ENCODE measurements at regions of chr19 and their contacts with region 1.

Region 1: DNA sequence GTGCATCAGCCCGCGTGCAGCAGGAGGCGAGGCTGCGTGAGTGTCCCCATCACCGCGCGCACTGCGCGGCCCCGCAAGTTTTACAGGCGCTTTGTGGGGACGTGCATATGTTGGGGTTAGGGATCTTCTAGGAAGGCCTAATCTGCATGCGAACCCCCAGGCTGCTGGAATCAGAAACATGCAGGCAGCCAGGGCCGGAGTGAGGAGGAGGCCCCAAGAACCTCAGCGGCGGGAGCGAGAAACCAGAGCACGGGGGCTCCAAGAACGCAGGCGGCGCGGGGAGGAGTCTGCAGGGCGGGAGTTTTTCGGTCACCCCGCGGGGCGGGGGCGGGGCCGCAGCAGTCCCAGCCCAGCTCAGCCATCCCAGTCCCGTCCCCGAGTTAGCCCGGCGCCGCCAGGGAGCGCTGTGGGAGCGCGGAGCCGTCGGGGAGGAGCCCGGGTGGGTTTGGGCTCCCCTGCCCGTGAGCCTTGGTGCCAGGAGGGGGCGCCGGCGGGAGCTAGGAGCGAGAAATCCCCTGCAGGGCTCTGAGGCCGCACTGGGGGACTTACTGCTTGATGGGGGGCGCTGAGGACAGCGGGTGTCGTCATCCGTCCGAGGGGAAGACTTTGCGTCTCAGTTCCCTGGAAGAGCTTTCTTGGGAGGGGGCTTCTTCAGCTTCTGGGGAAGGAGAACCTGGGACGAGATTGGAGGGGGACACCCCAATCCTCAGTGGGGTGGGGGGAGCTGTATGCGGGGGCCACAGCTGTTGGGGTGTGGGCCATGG is 933 bp upstream of the NRTN start:
- DNase-seq: peak; percentile 91
- H3K4me3 Mint-ChIP-seq: peak overlapping the region; percentile 66
- H3K27ac Mint-ChIP-seq: no peak overlapping the region
- H3K4me1 Mint-ChIP-seq: no peaks in the 10 kb centered on the region
- H3K27me3 Mint-ChIP-seq: no peaks in the 10 kb centered on the region
- CTCF ChIP-seq: peak; percentile 95

Region 2: GRCh38 chr19:5775668-5776309 is 28.1 kb before region 1 on chr19:
- CTCF ChIA-PET with region 1: interaction called, 11 read pairs
- POLR2A ChIA-PET with region 1: no interaction called
- intact Hi-C with region 1: no loop called
- DNase-seq: peak; percentile 53
- H3K4me3 Mint-ChIP-seq: no peak overlapping the region
- H3K27ac Mint-ChIP-seq: no peak overlapping the region
- H3K4me1 Mint-ChIP-seq: peaks cover 5% of the 10 kb centered on the region
- H3K27me3 Mint-ChIP-seq: no peaks in the 10 kb centered on the region
- CTCF ChIP-seq: no peak

Region 3: DNA sequence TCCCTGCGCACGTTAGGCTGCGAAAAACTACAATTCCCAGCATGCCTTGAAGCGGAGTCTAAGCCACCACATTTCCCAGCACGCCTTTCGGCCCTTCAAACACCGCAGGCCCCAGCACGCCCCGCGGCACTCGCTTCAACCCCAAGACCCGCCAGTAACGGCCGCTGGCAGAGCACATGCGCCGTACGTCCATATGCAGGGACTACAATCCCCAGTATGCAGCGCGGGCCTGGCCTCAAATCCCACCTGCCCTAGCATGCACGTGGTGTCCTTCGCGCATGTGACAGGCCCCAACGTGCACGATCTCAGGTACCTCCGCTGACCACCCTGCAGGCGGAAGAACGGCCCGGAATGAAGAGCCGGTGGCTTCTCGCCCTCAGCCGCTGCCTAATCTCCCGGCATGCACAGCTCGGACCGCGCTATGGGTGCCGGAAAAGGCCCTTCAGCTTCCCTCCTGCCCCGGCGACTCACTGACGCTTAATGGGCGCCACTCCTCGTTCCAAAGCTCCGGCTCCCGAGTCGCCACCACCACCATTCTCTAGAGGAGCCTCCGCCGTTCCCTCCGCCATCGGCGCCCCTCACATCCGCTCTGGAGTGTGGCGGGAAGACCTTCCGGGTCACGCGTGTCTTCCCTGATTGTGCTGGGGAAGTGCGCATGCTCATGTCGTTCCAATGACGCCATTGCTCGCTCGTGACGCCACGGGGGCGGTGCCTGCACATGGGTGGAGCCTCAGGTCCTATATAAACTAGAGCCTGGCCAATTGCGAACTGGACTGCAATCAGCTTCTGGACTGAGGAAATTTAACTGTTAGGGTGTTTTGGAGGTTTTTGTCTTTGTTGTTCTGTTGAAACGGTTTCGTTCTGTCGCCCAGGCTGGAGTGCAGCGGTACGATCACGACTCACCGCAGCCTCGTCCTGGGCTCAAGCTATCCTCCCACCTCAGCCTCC is 13.1 kb before region 1 on chr19 and contains the start of gene DUS3L:
- CTCF ChIA-PET with region 1: interaction called, 21 read pairs
- POLR2A ChIA-PET with region 1: interaction called, 14 read pairs
- intact Hi-C with region 1: no loop called
- DNase-seq: peak; percentile 98
- H3K4me3 Mint-ChIP-seq: peak within 1 kb of the TSS; percentile 98
- H3K27ac Mint-ChIP-seq: peak within 1 kb of the TSS; percentile 100
- H3K4me1 Mint-ChIP-seq: peaks cover 14% of the 10 kb centered on the region
- H3K27me3 Mint-ChIP-seq: no peaks in the 10 kb centered on the region
- CTCF ChIP-seq: no peak
- total RNA-seq, gene DUS3L: 53.5 and 77.6 TPM in 2 replicates

Region 4: DNA sequence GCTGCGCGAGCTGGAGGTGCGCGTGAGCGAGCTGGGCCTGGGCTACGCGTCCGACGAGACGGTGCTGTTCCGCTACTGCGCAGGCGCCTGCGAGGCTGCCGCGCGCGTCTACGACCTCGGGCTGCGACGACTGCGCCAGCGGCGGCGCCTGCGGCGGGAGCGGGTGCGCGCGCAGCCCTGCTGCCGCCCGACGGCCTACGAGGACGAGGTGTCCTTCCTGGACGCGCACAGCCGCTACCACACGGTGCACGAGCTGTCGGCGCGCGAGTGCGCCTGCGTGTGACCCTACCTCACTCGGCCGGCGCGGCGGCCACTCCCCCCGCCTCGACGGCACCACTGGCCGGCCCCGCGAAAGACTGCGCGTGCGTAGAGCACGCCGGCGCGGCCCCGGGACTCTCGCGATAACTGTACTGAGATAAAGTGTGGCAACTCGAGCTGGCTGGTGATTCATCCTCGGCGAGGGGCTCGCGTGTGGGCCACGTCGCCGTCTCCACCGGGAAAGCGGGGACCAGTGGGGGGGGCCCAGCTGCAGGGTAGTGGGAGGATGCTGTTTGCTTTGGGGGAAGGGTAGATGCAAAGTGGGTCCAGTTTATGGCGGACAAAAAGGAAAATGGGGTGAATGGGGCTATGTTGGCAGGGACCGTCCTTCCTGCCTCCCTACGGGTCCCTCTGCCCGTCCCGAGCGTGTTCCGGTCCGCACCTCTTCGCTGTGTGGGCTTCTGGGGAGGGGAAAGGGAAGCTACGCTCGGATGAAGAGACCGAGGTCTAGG is 24.1 kb after region 1 on chr19:
- CTCF ChIA-PET with region 1: interaction called, 45 read pairs
- POLR2A ChIA-PET with region 1: interaction called, 4 read pairs
- intact Hi-C with region 1: loop called (anchors 1 kb)
- DNase-seq: peak; percentile 84
- H3K4me3 Mint-ChIP-seq: peak overlapping the region; percentile 95
- H3K27ac Mint-ChIP-seq: peak overlapping the region; percentile 93
- H3K4me1 Mint-ChIP-seq: peaks cover 13% of the 10 kb centered on the region
- H3K27me3 Mint-ChIP-seq: no peaks in the 10 kb centered on the region
- CTCF ChIP-seq: no peak

Region 5: GRCh38 chr19:5891938-5892771 is 88.2 kb after region 1 on chr19:
- CTCF ChIA-PET with region 1: interaction called, 8 read pairs
- POLR2A ChIA-PET with region 1: interaction called, 5 read pairs
- intact Hi-C with region 1: loop called (anchors 2 kb)
- DNase-seq: peak; percentile 43
- H3K4me3 Mint-ChIP-seq: no peak overlapping the region
- H3K27ac Mint-ChIP-seq: no peak overlapping the region
- H3K4me1 Mint-ChIP-seq: no peaks in the 10 kb centered on the region
- H3K27me3 Mint-ChIP-seq: no peaks in the 10 kb centered on the region
- CTCF ChIP-seq: peak; percentile 46

Region 6: DNA sequence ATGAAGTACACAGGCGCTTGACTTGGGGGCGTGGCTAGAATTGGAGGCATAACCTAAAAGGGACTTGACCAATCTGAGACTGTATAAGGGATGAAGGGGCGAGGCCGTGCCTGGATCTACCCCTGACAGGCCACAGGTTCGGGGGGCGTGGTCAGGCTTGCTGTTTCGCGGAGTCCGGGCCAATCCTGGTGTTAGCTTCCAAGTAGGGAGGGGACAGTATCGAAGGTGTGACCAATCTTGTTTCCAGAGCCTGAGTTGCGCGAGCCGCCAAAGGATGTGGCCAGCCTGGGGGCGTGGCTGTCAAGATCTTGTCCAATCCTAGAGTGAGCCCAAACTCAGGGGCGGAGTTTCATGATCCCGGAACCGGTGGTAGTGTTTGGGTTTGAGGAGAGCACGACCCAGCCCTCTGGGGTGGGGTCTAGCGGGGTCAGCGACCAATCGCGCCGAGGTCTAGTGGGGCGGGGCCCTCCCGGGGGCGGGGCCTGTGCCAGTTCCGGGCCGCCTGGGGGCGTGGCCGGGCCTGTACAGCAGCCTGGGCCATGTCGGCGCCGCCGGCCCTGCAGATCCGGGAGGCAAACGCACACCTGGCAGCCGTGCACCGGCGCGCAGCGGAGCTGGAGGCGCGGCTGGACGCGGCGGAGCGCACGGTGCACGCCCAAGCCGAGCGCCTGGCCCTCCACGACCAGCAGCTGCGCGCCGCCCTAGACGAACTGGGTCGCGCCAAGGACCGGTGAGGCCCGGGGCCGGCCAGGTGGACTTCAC is 100.6 kb after region 1 on chr19 and contains the start of gene VMAC:
- CTCF ChIA-PET with region 1: interaction called, 13 read pairs
- POLR2A ChIA-PET with region 1: interaction called, 21 read pairs
- intact Hi-C with region 1: no loop called
- DNase-seq: peak; percentile 100
- H3K4me3 Mint-ChIP-seq: peak within 1 kb of the TSS; percentile 97
- H3K27ac Mint-ChIP-seq: peak within 1 kb of the TSS; percentile 98
- H3K4me1 Mint-ChIP-seq: peaks cover 6% of the 10 kb centered on the region
- H3K27me3 Mint-ChIP-seq: no peaks in the 10 kb centered on the region
- CTCF ChIP-seq: no peak
- total RNA-seq, gene VMAC: 6.6 and 7.0 TPM in 2 replicates

Region 7: GRCh38 chr19:5987077-5987818 is 183.3 kb after region 1 on chr19:
- CTCF ChIA-PET with region 1: interaction called, 4 read pairs
- POLR2A ChIA-PET with region 1: no interaction called
- intact Hi-C with region 1: loop called (anchors 10 kb)
- DNase-seq: peak; percentile 84
- H3K4me3 Mint-ChIP-seq: peak overlapping the region; percentile 47
- H3K27ac Mint-ChIP-seq: no peak overlapping the region
- H3K4me1 Mint-ChIP-seq: peaks cover 14% of the 10 kb centered on the region
- H3K27me3 Mint-ChIP-seq: no peaks in the 10 kb centered on the region
- CTCF ChIP-seq: peak; percentile 89

Measured in MCF 10A (cell line).